Aorta (tissue), 5 donors: ENCODE measurements at regions of chr2 and their contacts with region 1.

Region 1: DNA sequence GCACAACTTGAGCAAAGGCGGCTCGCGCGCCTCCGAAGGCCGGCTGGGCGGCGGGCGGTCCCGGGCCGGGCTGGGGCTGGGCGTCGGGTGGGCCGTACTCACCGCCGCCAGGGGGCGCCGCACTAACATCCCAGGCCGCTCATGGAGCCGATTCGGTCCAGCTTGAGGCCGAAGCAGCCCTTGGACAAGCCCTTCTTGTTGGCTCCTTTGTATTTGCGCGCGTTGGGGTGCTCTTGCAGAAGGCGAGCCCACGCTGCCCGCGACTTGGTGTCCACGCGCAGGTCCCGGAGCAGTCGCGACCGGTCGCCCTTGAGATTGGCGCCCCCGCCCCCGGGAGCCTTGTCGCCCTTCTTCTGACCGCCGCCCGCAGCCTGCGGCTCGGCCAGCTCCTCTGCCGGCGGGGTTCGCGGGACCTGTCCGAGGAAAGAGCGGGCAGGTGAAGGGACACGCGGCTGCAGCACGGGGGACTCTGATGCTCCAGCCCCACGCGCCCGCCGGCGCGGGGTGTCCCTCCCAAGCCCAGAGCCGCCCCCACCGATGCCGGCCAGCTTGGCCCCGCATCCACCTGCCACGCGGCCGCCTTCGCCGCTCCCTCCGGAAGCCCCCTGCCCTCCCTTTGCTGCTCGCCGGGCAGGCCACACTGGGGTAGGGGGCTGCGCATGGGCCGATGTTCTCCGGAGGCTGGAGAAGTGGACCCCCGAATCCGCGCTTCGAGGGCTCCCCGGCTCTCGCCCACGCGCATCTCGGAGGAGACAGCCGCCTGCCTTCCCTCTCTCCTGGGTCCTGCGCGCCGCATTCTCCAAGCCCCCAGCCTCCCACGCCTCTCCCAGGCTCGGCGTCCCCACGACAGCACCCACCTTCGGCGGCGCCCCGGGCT is 655 bp downstream of the NPPC start:
- DNase-seq: peak; percentile 86 to 95
- ATAC-seq: peak; percentile 93
- H3K4me3 ChIP-seq: peak overlapping the region in 1 of 2 donors; percentile 10
- H3K27ac ChIP-seq: no peak overlapping the region
- H3K4me1 ChIP-seq: no peaks in the 10 kb centered on the region
- H3K27me3 ChIP-seq: peaks cover 0 to 2% of the 10 kb centered on the region in 2 donors

Region 2: GRCh38 chr2:231961349-231962166 is 36.0 kb after region 1 on chr2 and contains the start of gene DIS3L2:
- intact Hi-C with region 1: no loop called
- DNase-seq: peak; percentile 86 to 94
- ATAC-seq: peak; percentile 96
- H3K4me3 ChIP-seq: peak within 1 kb of the TSS; percentile 80 to 81
- H3K27ac ChIP-seq: no peak within 1 kb of the TSS
- H3K4me1 ChIP-seq: no peaks in the 10 kb centered on the region
- H3K27me3 ChIP-seq: no peaks in the 10 kb centered on the region
- total RNA-seq, gene DIS3L2: 28.4 to 40.0 TPM

Region 3: DNA sequence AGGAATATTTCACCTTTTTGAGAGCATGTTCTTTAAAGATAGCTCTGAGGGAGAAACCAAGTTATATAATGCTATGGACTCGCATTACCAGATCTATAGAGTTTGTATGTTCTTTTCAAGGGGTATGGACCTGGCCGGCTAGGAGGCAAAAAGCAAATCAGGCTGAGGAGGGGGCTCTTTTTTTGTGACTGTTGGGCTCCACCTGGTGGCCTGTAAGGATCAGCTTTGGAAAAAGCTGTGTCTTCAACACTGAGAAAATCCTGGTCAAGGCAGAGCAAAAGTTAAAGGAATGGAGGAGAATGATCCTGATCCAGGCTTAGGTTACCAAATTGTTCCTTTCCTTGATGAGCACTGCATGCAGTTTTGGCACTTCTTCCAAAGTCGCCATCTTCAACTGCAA is 216.5 kb after region 1 on chr2:
- intact Hi-C with region 1: loop called (anchors 1 to 5 kb)
- DNase-seq: no peak
- ATAC-seq: no peak
- H3K4me3 ChIP-seq: no peak overlapping the region
- H3K27ac ChIP-seq: no peak overlapping the region
- H3K4me1 ChIP-seq: no peaks in the 10 kb centered on the region
- H3K27me3 ChIP-seq: no peaks in the 10 kb centered on the region

Region 4: GRCh38 chr2:232327105-232328041 is 401.8 kb after region 1 on chr2:
- intact Hi-C with region 1: loop called (anchors 5 to 10 kb)
- DNase-seq: peak; percentile 72 to 90
- ATAC-seq: peak; percentile 75
- H3K4me3 ChIP-seq: no peak overlapping the region
- H3K27ac ChIP-seq: no peak overlapping the region
- H3K4me1 ChIP-seq: no peaks in the 10 kb centered on the region
- H3K27me3 ChIP-seq: no peaks in the 10 kb centered on the region

Region 5: DNA sequence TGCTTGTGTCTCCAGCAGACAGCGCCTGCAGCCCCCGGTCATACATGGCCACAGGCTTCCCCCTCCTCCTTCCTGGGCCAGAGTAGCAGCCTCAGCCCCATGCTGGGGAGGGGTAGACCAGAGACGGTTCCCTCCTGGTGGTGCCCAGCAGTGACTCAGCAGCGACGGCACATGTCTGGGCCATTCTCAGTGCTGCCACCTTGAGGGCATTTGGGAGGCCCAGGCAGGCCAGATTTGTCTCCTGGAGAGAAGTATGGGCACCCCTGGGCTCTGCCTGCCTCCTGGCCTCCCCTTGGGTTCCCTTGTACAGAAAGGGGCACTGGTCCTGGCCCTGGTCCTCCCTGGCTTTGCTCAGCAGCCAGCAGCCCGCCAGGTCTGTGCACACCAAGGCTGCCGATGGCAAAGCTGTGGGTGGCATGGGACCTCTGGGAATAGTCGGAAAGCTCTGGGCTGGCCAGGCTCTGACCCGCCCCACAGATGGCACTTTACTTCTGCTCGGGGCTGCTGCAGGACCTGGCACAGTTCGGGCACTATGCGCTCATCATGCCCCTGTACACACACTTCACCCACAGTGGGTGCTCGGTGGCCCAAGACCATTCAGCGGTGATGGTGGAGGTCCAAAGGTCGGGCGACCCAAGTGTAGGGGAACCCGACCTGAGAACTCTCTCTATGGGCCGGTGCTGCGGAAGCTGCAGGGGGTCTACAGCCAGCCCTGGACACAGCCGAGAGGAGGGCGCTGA is 519.0 kb after region 1 on chr2:
- intact Hi-C with region 1: loop called in 1 of 2 experiments (anchors 5 kb)
- DNase-seq: peak in 1 of 2 donors; percentile 71
- ATAC-seq: no peak
- H3K4me3 ChIP-seq: no peak overlapping the region
- H3K27ac ChIP-seq: no peak overlapping the region
- H3K4me1 ChIP-seq: no peaks in the 10 kb centered on the region
- H3K27me3 ChIP-seq: no peaks in the 10 kb centered on the region